AG04450 (cell line): ENCODE measurements at regions of chr20 and their contacts with region 1.

Region 1: DNA sequence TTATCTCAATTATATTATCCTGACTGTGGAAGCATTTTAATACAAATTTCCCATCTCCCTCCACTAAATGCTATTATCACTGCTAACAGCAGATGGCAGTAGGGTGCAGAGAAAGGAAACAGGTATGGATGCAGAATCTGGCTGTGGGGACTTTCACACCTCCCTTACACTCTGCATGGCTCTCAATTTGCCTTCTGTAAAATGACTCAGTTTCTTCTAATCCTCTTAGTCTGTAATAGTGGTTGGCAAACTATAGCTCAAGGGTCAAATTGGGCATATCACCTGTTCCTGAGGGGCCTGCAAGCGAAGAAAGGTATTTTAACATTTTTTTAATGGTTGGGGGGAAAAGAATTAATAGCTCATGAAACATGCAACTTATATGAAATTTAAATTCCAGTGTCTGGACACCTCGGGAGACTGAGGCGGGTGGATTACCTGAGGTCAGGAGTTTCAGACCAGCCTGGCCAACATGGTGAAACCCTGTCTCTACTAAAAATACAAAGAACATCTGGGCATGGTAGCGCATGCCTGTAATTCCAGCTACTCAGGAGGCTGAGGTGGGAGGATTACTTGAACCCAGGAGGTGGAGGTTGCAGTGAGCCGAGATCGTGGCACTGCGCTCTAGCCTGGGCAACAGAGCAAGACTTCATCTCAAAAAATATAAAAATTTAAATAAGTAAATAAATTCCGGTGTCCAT is 83.5 kb downstream of the ZMYND8 start:
- DNase-seq: peak; percentile 20
- H3K4me3 ChIP-seq: no peak overlapping the region
- H3K27ac ChIP-seq: peak overlapping the region; percentile 42
- H3K27me3 ChIP-seq: no peaks in the 10 kb centered on the region
- CTCF ChIP-seq: peak; percentile 87

Region 2: DNA sequence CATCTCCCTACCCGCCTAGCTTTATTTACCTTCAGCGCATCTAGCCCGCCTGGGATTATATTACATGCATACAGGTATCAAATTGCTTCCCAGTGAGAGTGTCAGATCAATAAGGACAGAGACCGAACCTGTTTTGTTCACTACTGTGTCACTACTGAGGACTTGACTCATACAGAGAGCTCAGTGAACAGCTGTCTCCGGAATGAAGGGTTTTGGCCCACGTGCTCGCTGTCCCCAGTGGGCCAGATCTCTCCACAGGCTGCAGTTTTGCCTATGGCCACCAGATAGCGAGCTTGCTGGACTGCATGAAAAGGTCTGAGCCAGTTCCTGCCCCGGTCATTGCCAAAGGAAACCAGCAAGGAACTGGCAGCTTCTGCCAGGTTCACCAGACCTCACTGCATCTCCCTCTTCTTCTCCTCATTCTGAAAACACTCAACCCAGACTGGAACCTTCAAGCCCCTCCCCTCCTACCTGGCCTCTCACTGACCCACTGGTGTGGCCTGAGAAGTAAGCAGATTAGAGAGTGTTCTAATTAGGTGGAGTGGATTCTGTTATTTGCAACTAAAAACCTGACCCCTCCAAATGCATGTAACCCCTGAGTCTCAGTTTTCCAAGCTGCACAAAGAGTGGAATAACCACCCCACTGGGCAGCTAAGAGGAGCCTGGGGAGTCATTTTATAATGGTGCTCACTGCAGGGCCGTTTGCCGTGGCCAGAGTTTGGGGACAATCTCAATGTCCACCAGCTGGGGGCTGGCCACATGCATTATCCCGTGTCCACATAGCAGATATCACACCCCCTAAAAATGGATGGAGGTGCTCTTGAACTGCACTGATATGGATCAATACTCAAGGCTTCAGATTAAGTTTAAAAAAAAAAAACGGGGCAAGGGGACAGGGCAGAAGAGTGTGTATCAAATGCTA is 67.2 kb before region 1 on chr20:
- CTCF ChIA-PET with region 1: interaction called, 26 read pairs
- POLR2A ChIA-PET with region 1: interaction called, 3 read pairs
- DNase-seq: peak; percentile 59
- H3K4me3 ChIP-seq: no peak overlapping the region
- H3K27ac ChIP-seq: peak overlapping the region; percentile 21
- H3K27me3 ChIP-seq: no peaks in the 10 kb centered on the region
- CTCF ChIP-seq: peak; percentile 79

Region 3: GRCh38 chr20:47258745-47259695 is 14.0 kb before region 1 on chr20:
- CTCF ChIA-PET with region 1: interaction called, 31 read pairs
- POLR2A ChIA-PET with region 1: no interaction called
- DNase-seq: no peak
- H3K4me3 ChIP-seq: no peak overlapping the region
- H3K27ac ChIP-seq: peak overlapping the region; percentile 78
- H3K27me3 ChIP-seq: no peaks in the 10 kb centered on the region
- CTCF ChIP-seq: no peak

Region 4: DNA sequence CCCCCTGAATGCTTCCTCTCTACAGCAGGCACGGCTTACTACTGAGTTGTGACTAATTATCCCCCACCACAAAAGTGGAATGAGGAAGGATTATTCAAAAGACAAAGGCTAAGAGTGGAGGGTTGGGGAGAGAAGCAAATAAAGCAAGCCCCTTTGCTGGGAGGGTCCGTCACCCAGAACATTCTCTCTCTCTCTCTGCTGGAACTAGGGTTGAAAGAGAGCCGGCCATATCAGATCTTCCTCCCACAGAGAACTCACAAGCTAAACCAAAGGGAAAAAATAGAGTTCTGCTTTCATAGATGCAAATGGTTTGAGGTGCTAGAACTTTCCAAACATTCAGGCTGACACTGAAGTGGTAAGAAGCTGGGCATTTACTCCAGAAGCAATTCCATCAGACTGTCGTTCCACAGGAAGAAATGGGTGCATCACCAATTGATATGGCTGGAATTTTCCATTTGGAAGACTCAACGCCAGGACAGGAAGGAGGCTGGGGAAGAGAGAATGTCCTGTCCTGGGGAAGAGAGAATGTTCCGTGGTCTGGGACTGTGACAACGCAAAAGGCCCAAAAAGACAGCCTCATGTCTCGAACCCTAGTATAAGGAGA is 75.6 kb after region 1 on chr20:
- CTCF ChIA-PET with region 1: interaction called, 11 read pairs
- POLR2A ChIA-PET with region 1: interaction called, 3 read pairs
- DNase-seq: no peak
- H3K4me3 ChIP-seq: no peak overlapping the region
- H3K27ac ChIP-seq: no peak overlapping the region
- H3K27me3 ChIP-seq: no peaks in the 10 kb centered on the region
- CTCF ChIP-seq: no peak

Region 5: DNA sequence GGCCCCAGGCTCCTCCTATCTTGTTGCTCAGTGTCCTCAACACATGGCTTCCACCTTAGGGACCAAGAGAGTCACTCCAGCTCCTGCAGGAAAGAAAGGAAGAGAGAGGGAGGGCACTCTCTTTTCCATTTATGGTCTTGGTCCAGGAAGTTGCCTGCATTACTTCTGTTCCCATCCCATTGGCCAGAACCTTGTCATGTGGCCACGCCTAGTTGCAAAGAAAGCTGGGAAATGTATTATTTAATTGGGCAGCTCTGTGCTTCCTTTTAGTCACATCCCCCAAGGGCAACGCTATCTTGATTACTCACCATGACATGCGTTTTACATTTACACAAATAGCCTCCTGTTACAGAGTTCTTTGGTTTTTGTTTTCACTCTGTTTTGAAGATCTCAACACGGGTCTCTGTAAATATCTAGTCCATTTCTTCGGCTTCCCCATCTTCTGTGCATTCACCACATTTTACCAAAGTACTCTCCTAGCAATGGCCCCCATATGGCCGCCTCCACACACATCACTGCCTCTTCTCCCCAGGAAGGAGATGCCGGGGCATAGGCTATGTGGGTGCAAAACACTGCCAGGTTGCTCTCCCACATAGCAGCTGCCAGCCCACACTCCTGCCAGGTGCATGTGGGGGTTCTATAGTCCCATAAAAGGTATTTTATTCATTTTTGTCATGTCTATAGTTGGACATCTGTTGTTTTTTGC is 119.1 kb after region 1 on chr20:
- CTCF ChIA-PET with region 1: interaction called, 10 read pairs
- POLR2A ChIA-PET with region 1: interaction called, 3 read pairs
- DNase-seq: peak; percentile 82
- H3K4me3 ChIP-seq: no peak overlapping the region
- H3K27ac ChIP-seq: peak overlapping the region; percentile 97
- H3K27me3 ChIP-seq: no peaks in the 10 kb centered on the region
- CTCF ChIP-seq: no peak